ENCODE measurements at regions of chr11 and their contacts with region 1.

Region 1: GRCh38 chr11:19938169-19938856 is 222.0 kb downstream of the DBX1 start:
- DNase-seq: peak; percentile 62 to 74
- H3K4me3 ChIP-seq: no peak overlapping the region
- H3K4me3 Mint-ChIP-seq: no peak overlapping the region
- H3K27ac Mint-ChIP-seq: no peak overlapping the region
- H3K4me1 ChIP-seq: no peaks in the 10 kb centered on the region
- H3K4me1 Mint-ChIP-seq: no peaks in the 10 kb centered on the region
- H3K27me3 ChIP-seq: no peaks in the 10 kb centered on the region
- H3K27me3 Mint-ChIP-seq: no peaks in the 10 kb centered on the region
- CTCF ChIP-seq: peak; percentile 88 to 89

Region 2: GRCh38 chr11:19912958-19913892 is 25.1 kb before region 1 on chr11:
- CTCF ChIA-PET with region 1: no interaction called
- POLR2A ChIA-PET with region 1: no interaction called
- intact Hi-C with region 1: loop called (anchors 1 kb)
- DNase-seq: no peak
- H3K4me3 ChIP-seq: no peak overlapping the region
- H3K4me3 Mint-ChIP-seq: peak overlapping the region; percentile 30
- H3K27ac Mint-ChIP-seq: peak overlapping the region; percentile 31
- H3K4me1 ChIP-seq: peaks cover 31% of the 10 kb centered on the region
- H3K4me1 Mint-ChIP-seq: peaks cover 54% of the 10 kb centered on the region
- H3K27me3 ChIP-seq: no peaks in the 10 kb centered on the region
- H3K27me3 Mint-ChIP-seq: no peaks in the 10 kb centered on the region
- CTCF ChIP-seq: no peak

Region 3: GRCh38 chr11:19978668-19979518 is 40.6 kb after region 1 on chr11:
- CTCF ChIA-PET with region 1: no interaction called
- POLR2A ChIA-PET with region 1: no interaction called
- intact Hi-C with region 1: no loop called
- DNase-seq: peak; percentile 63 to 74
- H3K4me3 ChIP-seq: no peak overlapping the region
- H3K4me3 Mint-ChIP-seq: peak overlapping the region; percentile 48
- H3K27ac Mint-ChIP-seq: peak overlapping the region; percentile 96
- H3K4me1 ChIP-seq: peaks cover 53% of the 10 kb centered on the region
- H3K4me1 Mint-ChIP-seq: peaks cover 52% of the 10 kb centered on the region
- H3K27me3 ChIP-seq: no peaks in the 10 kb centered on the region
- H3K27me3 Mint-ChIP-seq: no peaks in the 10 kb centered on the region
- CTCF ChIP-seq: no peak

Region 4: GRCh38 chr11:20110908-20111669 is 172.8 kb after region 1 on chr11:
- CTCF ChIA-PET with region 1: no interaction called
- POLR2A ChIA-PET with region 1: no interaction called
- intact Hi-C with region 1: loop called (anchors 1 kb)
- DNase-seq: peak; percentile 78 to 86
- H3K4me3 ChIP-seq: no peak overlapping the region
- H3K4me3 Mint-ChIP-seq: no peak overlapping the region
- H3K27ac Mint-ChIP-seq: no peak overlapping the region
- H3K4me1 ChIP-seq: 0 out of 2 replicates have a peak, but pooled peaks cover 3% of the 10 kb centered on the region
- H3K4me1 Mint-ChIP-seq: no peaks in the 10 kb centered on the region
- H3K27me3 ChIP-seq: no peaks in the 10 kb centered on the region
- H3K27me3 Mint-ChIP-seq: no peaks in the 10 kb centered on the region
- CTCF ChIP-seq: peak; percentile 91 to 95

Region 5: DNA sequence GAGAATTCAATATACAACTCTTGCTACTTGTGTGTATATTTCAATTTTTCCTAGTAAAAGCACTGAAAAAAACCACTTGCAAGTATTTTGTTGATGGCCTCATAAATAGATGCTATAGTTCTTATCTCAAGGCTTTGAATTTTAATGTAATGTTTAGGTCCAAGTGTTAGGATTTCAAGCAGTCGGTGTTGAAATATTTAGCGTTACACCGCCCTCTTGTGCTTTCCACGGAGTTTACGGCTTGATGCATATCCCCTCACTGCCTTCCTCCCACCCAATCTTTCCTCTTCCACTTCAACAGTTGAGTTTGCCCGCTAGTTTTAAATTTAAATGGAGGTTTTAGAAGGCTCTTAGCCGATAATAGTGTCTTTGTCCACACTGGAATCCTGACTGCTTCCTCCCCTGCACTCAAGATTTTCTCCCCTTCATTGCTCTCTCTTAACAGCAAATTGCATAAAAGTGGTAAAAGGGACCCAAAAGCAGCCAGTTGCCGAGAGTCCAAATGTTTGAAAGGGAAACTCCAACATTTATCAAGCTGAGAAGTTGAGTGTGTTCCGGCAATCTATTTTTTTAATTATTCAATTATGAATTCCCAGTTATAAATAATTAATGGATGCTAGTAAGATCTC is 399.3 kb after region 1 on chr11:
- CTCF ChIA-PET with region 1: no interaction called
- POLR2A ChIA-PET with region 1: no interaction called
- intact Hi-C with region 1: loop called (anchors 2 kb)
- DNase-seq: peak in 1 of 2 experiments; percentile 43
- H3K4me3 ChIP-seq: no peak overlapping the region
- H3K4me3 Mint-ChIP-seq: no peak overlapping the region
- H3K27ac Mint-ChIP-seq: no peak overlapping the region
- H3K4me1 ChIP-seq: no peaks in the 10 kb centered on the region
- H3K4me1 Mint-ChIP-seq: peaks cover 7% of the 10 kb centered on the region
- H3K27me3 ChIP-seq: no peaks in the 10 kb centered on the region
- H3K27me3 Mint-ChIP-seq: peaks cover 4% of the 10 kb centered on the region
- CTCF ChIP-seq: peak; percentile 63 to 70